H1 (cell line): ENCODE measurements at regions of chr5 and their contacts with region 1.

Region 1: DNA sequence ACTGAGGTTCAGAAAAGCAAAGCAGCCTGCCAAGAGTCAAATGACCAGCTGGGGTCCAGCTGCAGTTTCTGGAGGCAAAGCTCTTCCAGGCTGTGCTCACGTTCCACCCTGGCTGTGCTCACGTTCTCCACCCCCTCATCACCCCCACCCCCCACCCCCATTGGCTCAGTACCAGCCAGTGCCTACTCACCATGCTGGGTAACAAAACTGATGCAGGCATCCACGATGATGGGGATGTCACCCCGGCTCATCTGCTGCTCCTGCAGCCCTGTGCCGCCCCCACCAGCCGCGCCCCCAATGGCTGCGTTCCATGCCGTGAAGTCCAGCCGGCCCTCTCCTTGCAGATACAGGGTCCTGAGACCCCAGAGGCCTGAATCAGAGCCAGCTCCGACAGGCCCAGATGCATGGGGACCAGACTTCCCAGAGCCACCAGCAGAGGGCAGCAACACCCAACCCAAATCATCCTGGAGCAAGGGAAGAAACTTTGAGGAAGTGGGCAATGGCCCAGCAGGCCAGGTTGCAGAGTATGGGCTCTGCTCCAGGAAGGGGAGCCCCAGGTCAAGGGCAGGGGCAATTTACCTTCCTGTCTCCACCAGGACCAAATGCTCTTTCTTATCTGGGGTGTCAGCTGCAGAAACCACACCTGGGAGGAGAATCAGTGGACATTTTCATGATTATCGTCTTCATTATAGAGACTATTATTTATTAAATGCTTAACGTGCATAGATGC is 13.7 kb upstream of the FCHSD1 start:
- DNase-seq: peak; percentile 66 to 94
- H3K4me3 ChIP-seq: no peak overlapping the region
- H3K27ac ChIP-seq: no peak overlapping the region
- H3K4me1 ChIP-seq: no peaks in the 10 kb centered on the region
- H3K27me3 ChIP-seq: no peaks in the 10 kb centered on the region
- CTCF ChIP-seq: peak; percentile 91 to 96 (median 91)
- EP300 ChIP-seq: no peak
- POLR2A ChIP-seq: no peak
- RAD21 ChIP-seq: peak; percentile 90 to 95

Region 2: DNA sequence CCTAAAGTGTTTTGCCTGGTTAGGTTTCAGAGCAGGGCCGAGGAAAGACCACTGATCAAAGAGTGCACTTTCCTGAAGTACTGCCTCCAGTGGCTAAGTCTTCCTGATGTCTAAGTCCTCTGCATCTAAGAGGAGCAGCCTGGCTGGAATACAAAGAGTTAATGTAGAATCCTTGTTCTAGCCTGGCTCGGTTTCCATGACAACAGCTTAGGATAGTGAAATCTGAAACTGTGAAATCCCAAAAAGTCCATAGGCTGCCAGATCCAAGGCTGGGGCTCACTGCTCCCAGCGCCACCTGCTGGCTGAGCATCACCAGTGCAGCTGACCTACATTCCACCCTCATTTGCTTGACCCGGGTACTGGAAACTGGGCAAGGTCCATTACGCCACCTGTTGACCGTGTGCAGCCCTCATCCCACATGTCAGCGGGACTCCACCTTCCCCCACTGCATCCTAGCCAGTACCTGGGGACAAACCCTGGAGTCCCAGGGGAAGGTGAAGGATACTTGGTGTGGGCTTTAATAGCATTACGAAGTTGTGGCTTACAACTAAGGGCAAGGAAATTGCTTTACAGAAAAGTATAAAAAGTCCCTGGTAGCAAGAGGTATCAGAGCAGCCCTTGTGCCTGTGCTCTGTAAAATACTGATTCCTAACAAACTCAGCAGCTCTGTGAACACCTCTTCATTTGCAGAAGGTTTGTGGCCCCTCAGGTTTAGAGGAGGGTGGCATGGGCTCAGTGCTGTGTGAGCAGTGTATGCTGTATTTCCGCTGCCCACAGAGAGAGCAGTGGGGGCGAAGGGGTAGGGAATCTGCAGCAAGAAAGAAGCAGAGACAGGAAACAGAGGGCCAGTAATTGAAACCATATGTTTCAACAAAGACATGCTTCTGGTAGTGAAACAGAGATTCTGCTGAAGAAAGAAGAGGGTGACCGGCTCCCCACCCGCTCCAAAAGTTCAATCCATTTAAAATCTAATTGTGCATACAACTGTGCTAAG is 140.0 kb before region 1 on chr5:
- CTCF ChIA-PET with region 1: no interaction called
- POLR2A ChIA-PET with region 1: no interaction called
- DNase-seq: peak; percentile 90 to 95
- H3K4me3 ChIP-seq: no peak overlapping the region
- H3K27ac ChIP-seq: peak overlapping the region; percentile 26; the same call in 1 of the 2 replicates
- H3K4me1 ChIP-seq: peaks cover 2 to 15% (median 8%) of the 10 kb centered on the region in 4 experiments; a peak in 6 of 7 replicates
- H3K27me3 ChIP-seq: no peaks in the 10 kb centered on the region
- CTCF ChIP-seq: peak; percentile 99 to 100 (median 99)
- EP300 ChIP-seq: peak in 1 of 2 experiments; percentile 68; a peak in 1 of 3 replicates
- POLR2A ChIP-seq: no peak
- RAD21 ChIP-seq: peak; percentile 90 to 91

Region 3: GRCh38 chr5:141650851-141651727 is 13.8 kb before region 1 on chr5 and contains the start of gene FCHSD1:
- CTCF ChIA-PET with region 1: interaction called, 14 read pairs
- POLR2A ChIA-PET with region 1: interaction called, 23 read pairs
- DNase-seq: peak; percentile 66 to 95
- H3K4me3 ChIP-seq: peak within 1 kb of the TSS; percentile 43 to 83 (median 67)
- H3K27ac ChIP-seq: no peak within 1 kb of the TSS
- H3K4me1 ChIP-seq: peaks cover 2 to 8% (median 6%) of the 10 kb centered on the region in 4 experiments; a peak in 6 of 7 replicates
- H3K27me3 ChIP-seq: no peaks in the 10 kb centered on the region; a peak in 1 of 7 replicates
- CTCF ChIP-seq: no peak
- EP300 ChIP-seq: no peak
- POLR2A ChIP-seq: peak in 1 of 2 experiments; percentile 27; a peak in 1 of 3 replicates
- RAD21 ChIP-seq: no peak; a peak in 1 of 4 replicates
- total RNA-seq, gene FCHSD1: 30.1 and 32.2 TPM in 2 replicates

Region 4: GRCh38 chr5:141681695-141682641 is 17.1 kb after region 1 on chr5 and contains the start of gene ARAP3:
- CTCF ChIA-PET with region 1: interaction called, 59 read pairs
- POLR2A ChIA-PET with region 1: interaction called, 18 read pairs
- DNase-seq: peak in 1 of 2 experiments; percentile 88
- H3K4me3 ChIP-seq: peak within 1 kb of the TSS; percentile 60 to 73 (median 67)
- H3K27ac ChIP-seq: peak within 1 kb of the TSS; percentile 37; the same call in 1 of the 2 replicates
- H3K4me1 ChIP-seq: peaks cover 10 to 29% (median 20%) of the 10 kb centered on the region in 4 experiments
- H3K27me3 ChIP-seq: no peaks in the 10 kb centered on the region
- CTCF ChIP-seq: no peak
- EP300 ChIP-seq: no peak
- POLR2A ChIP-seq: no peak
- RAD21 ChIP-seq: no peak
- total RNA-seq, gene ARAP3: 45.7 and 48.6 TPM in 2 replicates